ENCODE measurements at regions of chr9 and their contacts with region 1.

Region 1: DNA sequence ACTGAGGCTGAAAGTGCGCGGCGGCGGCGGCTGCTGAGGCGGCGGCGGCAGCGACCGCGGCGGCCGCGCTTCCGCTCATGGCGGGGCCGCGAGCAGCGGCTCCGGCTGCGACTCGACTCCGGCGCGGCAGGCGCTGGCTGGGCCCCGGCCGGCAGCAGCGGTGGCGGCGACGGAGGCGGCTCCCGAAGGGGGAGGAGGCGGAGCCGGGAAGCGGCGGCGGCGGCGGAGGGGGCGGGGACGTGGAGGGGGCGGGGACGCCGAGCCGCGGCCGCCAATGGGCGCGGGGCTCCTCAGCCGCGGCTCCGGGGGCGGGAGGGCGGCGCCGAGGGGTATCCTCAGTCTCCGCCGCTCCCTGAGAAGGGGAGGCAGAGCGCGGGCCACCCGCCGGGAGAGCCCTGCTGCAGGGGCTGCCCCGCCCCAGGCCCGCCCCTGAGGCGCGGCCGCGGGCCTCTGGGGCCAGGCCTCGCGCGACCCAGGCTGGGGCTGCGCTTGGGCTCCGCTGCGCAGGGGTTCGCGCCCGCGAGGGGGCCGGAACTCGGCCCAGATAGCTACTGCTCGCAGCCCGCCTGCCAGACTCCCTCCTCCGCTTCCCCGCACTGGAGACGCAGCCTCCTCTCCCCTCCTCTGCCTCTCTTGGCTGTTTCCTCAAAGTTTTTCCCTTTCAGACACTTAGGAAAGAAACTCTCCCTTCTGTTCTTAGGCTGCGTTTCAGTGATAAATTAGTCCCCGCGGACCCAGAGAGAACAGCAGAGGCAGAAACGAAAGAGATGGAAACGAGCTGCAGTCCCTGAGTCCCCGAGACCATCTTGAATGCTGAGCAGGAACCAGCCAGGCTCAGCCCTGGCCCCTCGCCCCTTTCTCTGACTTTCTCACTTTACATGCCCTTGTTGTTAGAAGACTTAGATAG is 85.0 kb upstream of the MELK start:
- DNase-seq: peak; percentile 86 to 94 (median 90)
- H3K4me3 ChIP-seq: peak overlapping the region; percentile 97
- H3K4me3 Mint-ChIP-seq: peak overlapping the region; percentile 89 to 98 (median 92)
- H3K27ac ChIP-seq: peak overlapping the region; percentile 88
- H3K27ac Mint-ChIP-seq: peak overlapping the region; percentile 95 to 100 (median 98)
- H3K4me1 ChIP-seq: peaks cover 50% of the 10 kb centered on the region
- H3K4me1 Mint-ChIP-seq: peaks cover 57 to 71% (median 64%) of the 10 kb centered on the region in 3 donors
- H3K27me3 ChIP-seq: no peaks in the 10 kb centered on the region
- H3K27me3 Mint-ChIP-seq: peaks cover 0 to 6% of the 10 kb centered on the region in 2 donors

Region 2: GRCh38 chr9:36400332-36401163 is 87.2 kb before region 1 on chr9:
- CTCF ChIA-PET with region 1: interaction called, 4 read pairs
- POLR2A ChIA-PET with region 1: interaction called, 15 read pairs
- DNase-seq: peak; percentile 89 to 92 (median 90)
- H3K4me3 ChIP-seq: peak overlapping the region; percentile 79
- H3K4me3 Mint-ChIP-seq: peak overlapping the region; percentile 89 to 98 (median 94)
- H3K27ac ChIP-seq: peak overlapping the region; percentile 96
- H3K27ac Mint-ChIP-seq: peak overlapping the region; percentile 97 to 99 (median 98)
- H3K4me1 ChIP-seq: peaks cover 36% of the 10 kb centered on the region
- H3K4me1 Mint-ChIP-seq: peaks cover 44 to 57% (median 55%) of the 10 kb centered on the region in 3 donors
- H3K27me3 ChIP-seq: no peaks in the 10 kb centered on the region
- H3K27me3 Mint-ChIP-seq: peaks cover 0 to 1% of the 10 kb centered on the region in 2 donors

Region 3: GRCh38 chr9:36407122-36407723 is 80.5 kb before region 1 on chr9:
- CTCF ChIA-PET with region 1: interaction called, 22 read pairs
- POLR2A ChIA-PET with region 1: interaction called, 6 read pairs
- DNase-seq: peak; percentile 32 to 72 (median 64)
- H3K4me3 ChIP-seq: no peak overlapping the region
- H3K4me3 Mint-ChIP-seq: peak overlapping the region in 1 of 7 donors; percentile 12
- H3K27ac ChIP-seq: no peak overlapping the region
- H3K27ac Mint-ChIP-seq: peak overlapping the region in 7 of 8 donors; percentile 27 to 94 (median 80)
- H3K4me1 ChIP-seq: peaks cover 6% of the 10 kb centered on the region
- H3K4me1 Mint-ChIP-seq: peaks cover 22 to 40% (median 26%) of the 10 kb centered on the region in 3 donors
- H3K27me3 ChIP-seq: no peaks in the 10 kb centered on the region
- H3K27me3 Mint-ChIP-seq: no peaks in the 10 kb centered on the region

Region 4: GRCh38 chr9:36457836-36458429 is 29.8 kb before region 1 on chr9:
- CTCF ChIA-PET with region 1: interaction called, 11 read pairs
- POLR2A ChIA-PET with region 1: interaction called, 24 read pairs
- DNase-seq: no peak
- H3K4me3 ChIP-seq: peak overlapping the region; percentile 33
- H3K4me3 Mint-ChIP-seq: peak overlapping the region; percentile 40 to 91 (median 81)
- H3K27ac ChIP-seq: peak overlapping the region; percentile 8
- H3K27ac Mint-ChIP-seq: peak overlapping the region; percentile 85 to 99 (median 95)
- H3K4me1 ChIP-seq: peaks cover 44% of the 10 kb centered on the region
- H3K4me1 Mint-ChIP-seq: peaks cover 55 to 83% (median 77%) of the 10 kb centered on the region in 3 donors
- H3K27me3 ChIP-seq: no peaks in the 10 kb centered on the region
- H3K27me3 Mint-ChIP-seq: peaks cover 0 to 3% of the 10 kb centered on the region in 2 donors

Region 5: GRCh38 chr9:36470643-36471290 is 17.0 kb before region 1 on chr9:
- CTCF ChIA-PET with region 1: interaction called, 4 read pairs
- POLR2A ChIA-PET with region 1: interaction called, 11 read pairs
- DNase-seq: peak; percentile 57 to 73 (median 63)
- H3K4me3 ChIP-seq: peak overlapping the region; percentile 64
- H3K4me3 Mint-ChIP-seq: peak overlapping the region; percentile 67 to 93 (median 82)
- H3K27ac ChIP-seq: peak overlapping the region; percentile 60
- H3K27ac Mint-ChIP-seq: peak overlapping the region; percentile 73 to 100 (median 96)
- H3K4me1 ChIP-seq: peaks cover 25% of the 10 kb centered on the region
- H3K4me1 Mint-ChIP-seq: peaks cover 35 to 49% (median 47%) of the 10 kb centered on the region in 3 donors
- H3K27me3 ChIP-seq: no peaks in the 10 kb centered on the region
- H3K27me3 Mint-ChIP-seq: no peaks in the 10 kb centered on the region

Measured in CD8-positive, alpha-beta memory T cell (primary cell).